Activated naive CD8-positive, alpha-beta T cell treated with anti-CD3 and anti-CD28 coated beads, Interleukin-2, amount 10 ng/mL, durations not matched to agents 7 days and 5 days (primary cell): ENCODE measurements at regions of chr11 and their contacts with region 1.

Region 1: DNA sequence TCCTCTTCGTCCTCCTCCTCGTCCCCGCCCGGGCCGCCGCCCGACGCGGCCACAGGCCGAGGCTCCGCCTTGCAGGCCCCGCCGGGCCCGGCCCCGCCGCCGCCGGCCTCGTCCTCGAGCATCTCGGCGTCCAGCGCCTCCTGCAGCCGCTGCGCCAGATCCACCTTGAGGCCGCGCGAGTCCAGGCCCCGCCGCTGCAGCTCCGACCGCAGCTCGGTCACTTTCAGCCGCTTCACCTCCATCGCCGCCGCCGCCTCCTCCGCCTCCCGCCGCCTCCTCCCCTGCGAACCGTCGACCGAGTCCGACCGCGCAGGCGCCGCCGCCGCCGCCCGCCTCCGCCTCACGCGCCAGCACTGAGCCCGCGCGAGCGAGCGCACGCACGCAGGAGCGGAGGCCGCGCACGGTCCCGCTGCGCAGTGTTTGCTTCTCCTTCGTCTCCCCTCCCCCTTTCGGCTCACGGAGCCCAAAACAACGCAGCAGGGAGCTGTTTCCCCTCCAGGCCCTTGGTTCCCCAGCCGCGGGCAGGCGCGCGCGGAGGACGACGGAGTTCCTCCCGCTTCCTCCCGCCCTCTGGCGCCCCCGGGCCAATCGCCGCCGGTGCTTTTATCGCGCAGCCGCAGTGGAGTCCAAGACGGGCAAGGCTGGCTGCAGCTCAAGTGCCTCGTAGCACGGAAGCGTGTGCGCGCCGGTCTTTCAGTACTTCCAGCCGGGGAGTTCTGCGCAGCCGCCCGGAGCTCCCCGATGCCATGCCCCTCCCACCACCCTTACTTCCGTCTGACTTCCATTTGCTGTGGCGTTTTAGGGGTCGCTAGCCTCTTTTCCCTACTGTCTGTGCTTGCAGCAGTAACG is at the start of gene HNRNPUL2:
- DNase-seq: peak; percentile 99
- ATAC-seq: peak; percentile 89
- H3K4me3 Mint-ChIP-seq: peak within 1 kb of the TSS; percentile 100
- H3K27ac Mint-ChIP-seq: peak within 1 kb of the TSS; percentile 98
- H3K4me1 Mint-ChIP-seq: peaks cover 41% of the 10 kb centered on the region
- H3K27me3 Mint-ChIP-seq: no peaks in the 10 kb centered on the region
- total RNA-seq, gene HNRNPUL2: 67.9 to 72.5 TPM

Region 2: GRCh38 chr11:62573592-62574362 is 153.4 kb before region 1 on chr11 and contains the start of gene EEF1G:
- POLR2A ChIA-PET with region 1: interaction called, 10 read pairs
- DNase-seq: peak; percentile 94
- ATAC-seq: peak; percentile 95
- H3K4me3 Mint-ChIP-seq: peak within 1 kb of the TSS; percentile 99
- H3K27ac Mint-ChIP-seq: peak within 1 kb of the TSS; percentile 95
- H3K4me1 Mint-ChIP-seq: peaks cover 41% of the 10 kb centered on the region
- H3K27me3 Mint-ChIP-seq: no peaks in the 10 kb centered on the region
- total RNA-seq, gene EEF1G: 1,132 to 1,152 TPM

Region 3: DNA sequence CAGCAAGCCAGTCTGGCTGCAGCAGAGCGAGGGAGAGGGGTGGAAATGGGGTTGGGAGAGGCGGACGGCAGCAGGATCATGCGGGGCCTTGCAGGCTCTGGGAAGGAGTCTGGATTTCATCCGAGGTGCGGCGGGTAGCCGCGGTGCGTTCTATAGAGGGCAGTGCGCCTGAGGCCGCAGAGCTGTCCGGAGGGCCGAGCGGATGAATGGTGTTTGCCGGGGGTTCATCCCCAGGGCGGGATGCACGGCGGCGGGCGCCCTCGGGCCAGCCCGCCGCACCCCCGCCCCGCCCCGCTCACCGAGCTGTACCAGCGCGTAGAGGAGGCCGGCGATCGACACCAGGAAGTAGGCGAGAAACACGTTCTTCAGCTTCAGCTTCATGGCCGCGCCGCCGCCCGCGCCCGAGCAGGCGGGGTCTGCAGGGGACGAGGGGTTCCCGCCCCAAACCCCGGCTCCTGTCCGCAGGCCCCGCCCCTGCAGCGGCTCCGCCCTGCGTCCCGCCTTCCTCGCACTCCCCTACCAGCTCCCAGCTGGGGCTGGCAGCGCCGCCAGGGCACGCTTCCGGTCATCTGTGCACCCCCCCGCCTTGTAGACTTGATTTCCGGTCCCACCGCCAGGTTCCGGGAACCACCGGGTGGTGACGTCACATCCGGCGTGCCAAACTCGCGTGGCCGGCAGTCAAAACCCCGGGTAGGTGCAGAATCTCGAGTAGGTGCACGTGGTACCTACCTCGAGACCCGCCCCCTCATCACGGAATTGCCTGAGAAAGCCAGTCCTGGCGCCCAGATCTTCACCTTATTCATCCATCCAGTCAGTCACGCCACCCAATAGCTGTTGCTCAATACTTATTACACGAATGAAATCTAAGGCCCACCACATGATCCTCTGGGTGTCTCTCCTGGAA is 105.3 kb before region 1 on chr11 and contains the start of gene B3GAT3:
- POLR2A ChIA-PET with region 1: interaction called, 17 read pairs
- DNase-seq: peak; percentile 94
- ATAC-seq: peak; percentile 87
- H3K4me3 Mint-ChIP-seq: peak within 1 kb of the TSS; percentile 93
- H3K27ac Mint-ChIP-seq: peak within 1 kb of the TSS; percentile 99
- H3K4me1 Mint-ChIP-seq: peaks cover 24% of the 10 kb centered on the region
- H3K27me3 Mint-ChIP-seq: no peaks in the 10 kb centered on the region
- total RNA-seq, gene B3GAT3: 76.1 to 87.0 TPM

Region 4: DNA sequence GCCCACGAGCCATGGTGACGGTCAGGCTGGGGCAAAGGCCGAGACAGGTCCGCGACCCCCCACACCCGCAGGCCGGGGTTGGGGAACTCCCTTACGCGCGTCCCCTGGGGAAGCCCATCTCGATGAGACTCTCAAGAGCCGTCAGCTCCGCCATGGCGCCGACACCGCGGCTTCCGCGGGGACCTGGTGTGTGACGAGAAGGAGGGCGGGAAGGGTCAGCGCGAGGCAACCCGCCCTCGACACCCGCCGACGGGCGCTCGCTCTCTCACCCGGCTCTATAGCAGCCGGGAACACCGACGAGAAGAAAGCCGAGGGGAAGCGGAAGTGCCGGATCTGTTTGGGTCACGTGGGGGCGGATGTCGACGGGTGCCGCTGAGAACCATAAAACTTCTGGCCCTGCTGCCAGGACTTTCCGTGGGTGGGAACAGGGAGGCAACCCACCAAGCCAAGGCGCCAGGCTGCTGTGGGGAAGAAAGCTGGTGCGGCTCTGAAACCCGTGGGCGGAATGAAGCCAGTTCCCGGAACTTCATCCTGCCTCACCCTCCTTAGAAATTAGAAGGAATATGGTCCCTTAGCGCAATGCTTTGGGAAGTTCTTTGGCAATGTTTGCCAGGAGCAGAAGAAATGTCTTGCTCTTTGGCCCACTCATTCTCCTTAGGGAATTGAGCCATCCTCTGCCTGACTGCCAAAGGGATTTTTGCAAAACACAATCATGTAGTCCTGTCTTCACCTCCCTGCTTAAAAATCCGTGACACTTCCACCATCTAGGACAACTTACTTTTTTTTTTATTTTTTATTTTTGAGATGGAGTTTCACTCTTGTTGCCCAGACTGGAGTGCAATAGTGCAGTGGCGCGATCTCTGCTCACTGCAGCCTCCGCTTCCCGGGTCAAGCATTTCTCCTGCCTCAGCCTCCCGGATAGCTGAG is 48.1 kb before region 1 on chr11 and contains the start of gene UBXN1:
- POLR2A ChIA-PET with region 1: interaction called, 13 read pairs
- DNase-seq: peak; percentile 82
- ATAC-seq: peak; percentile 79
- H3K4me3 Mint-ChIP-seq: peak within 1 kb of the TSS; percentile 85
- H3K27ac Mint-ChIP-seq: peak within 1 kb of the TSS; percentile 88
- H3K4me1 Mint-ChIP-seq: peaks cover 20% of the 10 kb centered on the region
- H3K27me3 Mint-ChIP-seq: no peaks in the 10 kb centered on the region
- total RNA-seq, gene UBXN1: 135 to 136 TPM

Region 5: GRCh38 chr11:62753736-62754603 is 26.8 kb after region 1 on chr11 and contains the start of gene ZBTB3:
- POLR2A ChIA-PET with region 1: interaction called, 32 read pairs
- DNase-seq: peak; percentile 95
- ATAC-seq: peak; percentile 99
- H3K4me3 Mint-ChIP-seq: peak within 1 kb of the TSS; percentile 96
- H3K27ac Mint-ChIP-seq: peak within 1 kb of the TSS; percentile 98
- H3K4me1 Mint-ChIP-seq: peaks cover 26% of the 10 kb centered on the region
- H3K27me3 Mint-ChIP-seq: peaks cover 4% of the 10 kb centered on the region
- total RNA-seq, gene ZBTB3: 14.0 to 17.1 TPM

Region 6: GRCh38 chr11:62778441-62778840 is 51.3 kb after region 1 on chr11:
- POLR2A ChIA-PET with region 1: no interaction called
- DNase-seq: no peak
- ATAC-seq: no peak
- H3K4me3 Mint-ChIP-seq: no peak overlapping the region
- H3K27ac Mint-ChIP-seq: peak overlapping the region; percentile 49
- H3K4me1 Mint-ChIP-seq: peaks cover 9% of the 10 kb centered on the region
- H3K27me3 Mint-ChIP-seq: no peaks in the 10 kb centered on the region

Region 7: GRCh38 chr11:62855571-62856332 is 128.6 kb after region 1 on chr11:
- POLR2A ChIA-PET with region 1: interaction called, 61 read pairs
- DNase-seq: peak; percentile 99
- ATAC-seq: peak; percentile 89
- H3K4me3 Mint-ChIP-seq: peak overlapping the region; percentile 96
- H3K27ac Mint-ChIP-seq: peak overlapping the region; percentile 98
- H3K4me1 Mint-ChIP-seq: peaks cover 45% of the 10 kb centered on the region
- H3K27me3 Mint-ChIP-seq: no peaks in the 10 kb centered on the region